Sciatic nerve (tissue), 2 donors: ENCODE measurements at regions of chr1 and their contacts with region 1.

Region 1: DNA sequence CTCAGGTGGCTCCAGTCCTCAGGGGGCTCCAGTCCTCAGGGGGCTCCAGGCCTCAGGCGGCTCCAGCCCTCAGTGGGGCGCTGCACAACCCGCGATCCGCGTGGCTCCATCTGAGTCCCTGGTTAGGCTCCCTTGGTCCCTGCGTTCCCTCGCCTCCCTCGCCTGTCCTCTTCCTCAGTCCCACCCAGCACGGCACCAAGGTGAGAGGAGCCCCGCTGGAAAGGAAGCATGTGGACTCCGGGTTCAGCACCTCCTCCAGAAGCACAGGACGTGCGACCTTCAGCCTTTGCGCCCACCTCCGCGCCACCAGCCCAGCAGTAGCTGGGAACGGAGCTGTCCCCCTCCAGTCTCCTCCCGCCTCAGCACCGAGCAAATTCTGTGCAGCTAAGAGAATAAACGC is 8.1 kb upstream of the OR2M5 start:
- DNase-seq: no peak
- ATAC-seq: no peak

Region 2: DNA sequence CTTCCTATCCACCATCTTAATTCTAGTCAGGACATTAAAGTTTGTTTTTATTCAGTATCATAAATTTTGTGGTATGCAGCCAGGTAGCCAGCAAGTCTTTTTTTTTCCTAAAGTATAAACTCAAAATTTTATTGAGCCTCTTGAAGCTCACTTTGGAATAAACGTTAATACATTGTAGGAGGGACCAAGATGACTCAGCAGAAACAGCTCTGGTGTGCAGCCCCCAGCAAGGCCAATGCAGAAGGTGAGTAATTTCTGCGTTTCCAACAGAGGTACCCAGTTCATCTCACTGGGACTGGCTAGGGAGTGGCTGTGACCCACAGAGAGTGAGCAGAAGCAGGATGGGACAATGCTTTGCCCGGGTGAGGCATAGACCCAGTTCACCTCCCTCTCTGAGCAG is 50.6 kb after region 1 on chr1:
- intact Hi-C with region 1: loop called (anchors 2 kb)
- DNase-seq: no peak
- ATAC-seq: no peak

Region 3: GRCh38 chr1:248243204-248243603 is 106.4 kb after region 1 on chr1:
- intact Hi-C with region 1: no loop called
- DNase-seq: no peak
- ATAC-seq: no peak